Left colon (tissue), 2 donors: ENCODE measurements at regions of chr5 and their contacts with region 1.

Region 1: DNA sequence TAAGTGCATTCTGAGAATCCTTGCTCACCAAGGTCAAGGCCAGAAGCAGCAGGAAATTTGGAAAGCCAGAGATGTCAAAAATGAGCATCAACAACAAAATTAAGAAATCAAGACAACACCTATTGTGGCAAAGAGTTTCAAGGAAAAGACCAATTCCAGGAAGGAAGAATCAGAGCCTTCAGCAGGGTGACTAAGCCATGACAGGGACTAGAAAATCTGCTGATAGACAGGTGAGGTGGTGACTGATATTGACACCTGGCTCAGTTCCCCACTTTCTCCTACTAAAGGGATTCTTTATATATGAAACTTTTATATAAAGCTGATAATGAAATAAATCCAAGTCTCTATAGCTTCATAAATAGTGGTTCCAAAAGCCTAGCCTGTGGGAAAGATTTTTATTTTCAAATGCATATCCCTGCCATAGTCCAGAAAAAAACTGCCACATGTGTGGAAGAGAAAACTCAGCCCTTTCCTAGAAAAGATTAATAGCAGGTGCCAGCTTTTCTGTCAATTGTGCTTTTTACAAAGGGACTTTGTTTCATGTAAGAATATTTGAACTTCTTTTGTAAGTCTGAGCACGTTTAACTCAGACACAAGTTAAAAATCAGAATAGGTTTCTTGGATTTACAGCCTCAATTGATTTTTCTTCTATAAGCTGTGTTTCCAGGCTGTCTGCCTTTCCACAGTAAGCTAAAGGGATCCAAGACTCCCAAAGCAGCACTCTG is 81.1 kb upstream of the GRAMD2B start:
- DNase-seq: no peak
- ATAC-seq: no peak

Region 2: DNA sequence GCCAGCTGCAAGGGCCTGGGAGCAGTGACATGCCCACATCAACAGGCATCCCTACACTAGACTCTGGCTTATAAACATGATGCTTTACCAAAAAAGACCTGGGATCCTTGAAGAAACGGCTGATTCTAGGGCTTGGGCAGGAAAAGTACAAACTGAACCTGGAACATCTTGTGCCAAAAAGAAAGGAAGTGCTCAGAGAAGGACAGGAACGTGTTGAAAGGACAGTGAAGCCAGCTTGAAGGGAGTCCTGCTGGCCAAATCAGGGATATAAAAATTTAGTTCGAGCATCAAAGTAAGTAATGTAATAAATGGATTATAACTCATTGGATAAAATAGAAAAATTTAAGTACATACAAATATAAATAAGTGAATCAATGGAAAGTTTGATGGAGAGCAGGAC is 194.8 kb after region 1 on chr5:
- intact Hi-C with region 1: loop called in 1 of 2 experiments (anchors 5 kb)
- DNase-seq: no peak
- ATAC-seq: no peak